ENCODE measurements at regions of chr5 and their contacts with region 1.

Region 1: GRCh38 chr5:33423018-33423630 is 17.6 kb upstream of the TARS1 start:
- DNase-seq: no peak
- H3K4me3 ChIP-seq: no peak overlapping the region
- H3K27ac ChIP-seq: no peak overlapping the region
- H3K27me3 ChIP-seq: peaks cover 0 to 7% (median 0%) of the 10 kb centered on the region in 45 donors
- CTCF ChIP-seq: peak in 52 of 56 donors; percentile 16 to 73 (median 48)

Region 2: GRCh38 chr5:32709781-32710549 is 713.2 kb before region 1 on chr5:
- intact Hi-C with region 1: loop called in 1 of 2 experiments (anchors 5 kb)
- DNase-seq: peak in 8 of 10 donors; percentile 5 to 63 (median 50)
- H3K4me3 ChIP-seq: peak overlapping the region; percentile 30 to 85 (median 62)
- H3K27ac ChIP-seq: peak overlapping the region in 1 of 59 donors; percentile 11
- H3K27me3 ChIP-seq: peaks cover 3 to 60% (median 31%) of the 10 kb centered on the region in 45 donors
- CTCF ChIP-seq: peak in 55 of 56 donors; percentile 32 to 75 (median 61)

Region 3: GRCh38 chr5:32964261-32964660 is 458.9 kb before region 1 on chr5:
- intact Hi-C with region 1: no loop called
- DNase-seq: peak in 2 of 10 donors; percentile 14 to 31
- H3K4me3 ChIP-seq: no peak overlapping the region
- H3K27ac ChIP-seq: no peak overlapping the region
- H3K27me3 ChIP-seq: peaks cover 0 to under 1% (median 0%) of the 10 kb centered on the region in 45 donors
- CTCF ChIP-seq: no peak

Region 4: GRCh38 chr5:33338336-33339113 is 84.6 kb before region 1 on chr5:
- intact Hi-C with region 1: no loop called
- DNase-seq: no peak
- H3K4me3 ChIP-seq: no peak overlapping the region
- H3K27ac ChIP-seq: no peak overlapping the region
- H3K27me3 ChIP-seq: peaks cover 0 to 3% (median 0%) of the 10 kb centered on the region in 45 donors
- CTCF ChIP-seq: no peak

Region 5: DNA sequence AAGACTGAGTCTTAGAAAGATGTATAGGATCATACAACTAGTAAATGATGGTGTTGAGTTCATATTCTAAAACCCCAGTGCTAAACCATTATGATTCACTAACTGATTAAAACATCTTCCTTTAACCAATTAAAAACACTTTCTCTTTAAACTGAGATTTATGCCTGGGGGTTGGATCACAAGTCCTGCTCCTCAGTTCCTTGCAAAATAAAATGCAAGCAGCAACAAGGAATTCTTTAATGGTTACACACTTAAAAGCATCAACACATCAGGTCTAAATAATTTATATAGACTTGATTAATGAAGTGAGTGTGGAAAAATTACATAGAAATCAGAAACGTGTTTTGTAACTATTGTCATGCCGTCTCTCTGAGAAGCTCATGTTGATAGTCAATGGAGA is 206.9 kb after region 1 on chr5:
- intact Hi-C with region 1: no loop called
- DNase-seq: no peak
- H3K4me3 ChIP-seq: no peak overlapping the region
- H3K27ac ChIP-seq: no peak overlapping the region
- H3K27me3 ChIP-seq: peaks cover 0 to 1% (median 0%) of the 10 kb centered on the region in 45 donors
- CTCF ChIP-seq: no peak

Measured in dorsolateral prefrontal cortex (tissue), 120 donors.